ENCODE measurements at regions of chr1 and their contacts with region 1.

Region 1: GRCh38 chr1:179365320-179366092 is at the start of gene AXDND1:
- DNase-seq: peak; percentile 78
- H3K4me3 Mint-ChIP-seq: peak within 1 kb of the TSS; percentile 85
- H3K27ac Mint-ChIP-seq: peak within 1 kb of the TSS; percentile 95
- H3K4me1 Mint-ChIP-seq: no peaks in the 10 kb centered on the region
- H3K27me3 Mint-ChIP-seq: no peaks in the 10 kb centered on the region
- CTCF ChIP-seq: no peak
- total RNA-seq, gene AXDND1: 0.50 and 0.64 TPM in 2 replicates

Region 2: GRCh38 chr1:178532392-178532791 is 833.1 kb before region 1 on chr1:
- CTCF ChIA-PET with region 1: no interaction called
- intact Hi-C with region 1: loop called (anchors 5 kb)
- DNase-seq: peak; percentile 91
- H3K4me3 Mint-ChIP-seq: no peak overlapping the region
- H3K27ac Mint-ChIP-seq: no peak overlapping the region
- H3K4me1 Mint-ChIP-seq: peaks cover 47% of the 10 kb centered on the region
- H3K27me3 Mint-ChIP-seq: no peaks in the 10 kb centered on the region
- CTCF ChIP-seq: peak; percentile 97

Region 3: DNA sequence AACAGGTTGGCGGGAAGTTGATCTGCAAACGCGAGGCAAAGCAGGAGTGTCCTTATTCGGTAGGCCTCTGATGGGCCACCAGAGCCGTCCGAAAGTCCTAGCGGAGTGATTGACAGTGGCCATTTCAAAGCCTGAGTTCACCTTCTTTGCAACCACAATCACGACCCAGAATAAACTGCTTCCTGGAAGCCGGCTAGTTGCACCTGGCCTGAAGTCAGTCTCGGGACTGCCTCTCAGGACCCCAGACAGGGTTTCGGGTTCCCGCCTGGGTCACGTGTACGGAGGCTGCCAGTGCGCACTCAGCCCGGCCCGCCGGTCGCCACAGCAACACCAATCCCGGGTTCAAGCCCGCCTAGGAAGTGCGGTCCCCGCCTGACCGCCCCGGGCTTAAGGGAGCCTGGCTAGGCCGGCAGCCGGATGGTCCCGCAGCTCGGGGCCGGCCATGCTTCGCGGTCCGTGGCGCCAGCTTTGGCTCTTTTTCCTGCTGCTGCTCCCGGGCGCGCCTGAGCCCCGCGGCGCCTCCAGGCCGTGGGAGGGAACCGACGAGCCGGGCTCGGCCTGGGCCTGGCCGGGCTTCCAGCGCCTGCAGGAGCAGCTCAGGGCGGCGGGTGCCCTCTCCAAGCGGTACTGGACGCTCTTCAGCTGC is 283.7 kb before region 1 on chr1 and contains the start of gene TOR3A:
- CTCF ChIA-PET with region 1: no interaction called
- intact Hi-C with region 1: loop called (anchors 1 kb)
- DNase-seq: peak; percentile 97
- H3K4me3 Mint-ChIP-seq: peak within 1 kb of the TSS; percentile 86
- H3K27ac Mint-ChIP-seq: peak within 1 kb of the TSS; percentile 92
- H3K4me1 Mint-ChIP-seq: peaks cover 13% of the 10 kb centered on the region
- H3K27me3 Mint-ChIP-seq: no peaks in the 10 kb centered on the region
- CTCF ChIP-seq: no peak
- total RNA-seq, gene TOR3A: 38.8 and 40.0 TPM in 2 replicates

Region 4: GRCh38 chr1:179121159-179121938 is 244.2 kb before region 1 on chr1:
- CTCF ChIA-PET with region 1: no interaction called
- intact Hi-C with region 1: loop called (anchors 1 kb)
- DNase-seq: peak; percentile 64
- H3K4me3 Mint-ChIP-seq: no peak overlapping the region
- H3K27ac Mint-ChIP-seq: no peak overlapping the region
- H3K4me1 Mint-ChIP-seq: peaks cover 29% of the 10 kb centered on the region
- H3K27me3 Mint-ChIP-seq: no peaks in the 10 kb centered on the region
- CTCF ChIP-seq: peak; percentile 78

Region 5: GRCh38 chr1:179251675-179252074 is 113.8 kb before region 1 on chr1:
- CTCF ChIA-PET with region 1: interaction called, 10 read pairs
- intact Hi-C with region 1: loop called (anchors 1 kb)
- DNase-seq: no peak
- H3K4me3 Mint-ChIP-seq: no peak overlapping the region
- H3K27ac Mint-ChIP-seq: no peak overlapping the region
- H3K4me1 Mint-ChIP-seq: no peaks in the 10 kb centered on the region
- H3K27me3 Mint-ChIP-seq: no peaks in the 10 kb centered on the region
- CTCF ChIP-seq: no peak

Region 6: GRCh38 chr1:179293340-179294327 is 71.9 kb before region 1 on chr1 and contains the start of gene SOAT1:
- CTCF ChIA-PET with region 1: interaction called, 5 read pairs
- intact Hi-C with region 1: loop called (anchors 2 kb)
- DNase-seq: peak; percentile 98
- H3K4me3 Mint-ChIP-seq: peak within 1 kb of the TSS; percentile 99
- H3K27ac Mint-ChIP-seq: peak within 1 kb of the TSS; percentile 93
- H3K4me1 Mint-ChIP-seq: peaks cover 46% of the 10 kb centered on the region
- H3K27me3 Mint-ChIP-seq: no peaks in the 10 kb centered on the region
- CTCF ChIP-seq: peak; percentile 35
- total RNA-seq, gene SOAT1: 134 and 190 TPM in 2 replicates

Region 7: DNA sequence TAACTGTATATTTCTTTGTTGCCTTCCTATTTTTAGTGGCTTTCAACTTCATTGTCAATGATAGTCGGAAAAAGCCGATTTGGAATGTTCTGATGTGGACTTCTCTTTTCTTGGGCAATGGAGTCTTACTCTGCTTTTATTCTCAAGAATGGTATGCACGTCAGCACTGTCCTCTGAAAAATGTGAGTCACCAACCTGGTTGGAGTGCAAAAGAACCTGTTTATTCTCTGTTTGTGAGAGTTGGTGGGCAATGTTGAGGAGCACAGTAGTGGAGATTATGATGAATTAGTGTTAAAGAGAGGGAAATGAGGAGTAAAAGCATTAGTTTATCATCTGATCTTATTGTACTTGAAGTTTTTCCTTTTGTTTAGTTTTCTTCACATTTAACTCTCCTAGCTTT is 14.2 kb before region 1 on chr1:
- CTCF ChIA-PET with region 1: no interaction called
- intact Hi-C with region 1: no loop called
- DNase-seq: no peak
- H3K4me3 Mint-ChIP-seq: no peak overlapping the region
- H3K27ac Mint-ChIP-seq: no peak overlapping the region
- H3K4me1 Mint-ChIP-seq: no peaks in the 10 kb centered on the region
- H3K27me3 Mint-ChIP-seq: no peaks in the 10 kb centered on the region
- CTCF ChIP-seq: no peak

Region 8: GRCh38 chr1:179599623-179600249 is 234.2 kb after region 1 on chr1:
- CTCF ChIA-PET with region 1: no interaction called
- intact Hi-C with region 1: loop called (anchors 10 kb)
- DNase-seq: peak; percentile 67
- H3K4me3 Mint-ChIP-seq: no peak overlapping the region
- H3K27ac Mint-ChIP-seq: no peak overlapping the region
- H3K4me1 Mint-ChIP-seq: peaks cover 9% of the 10 kb centered on the region
- H3K27me3 Mint-ChIP-seq: peaks cover 70% of the 10 kb centered on the region
- CTCF ChIP-seq: peak; percentile 45

Measured in Calu3 (cell line).